IMR-90 (cell line): ENCODE measurements at regions of chr13 and their contacts with region 1.

Region 1: DNA sequence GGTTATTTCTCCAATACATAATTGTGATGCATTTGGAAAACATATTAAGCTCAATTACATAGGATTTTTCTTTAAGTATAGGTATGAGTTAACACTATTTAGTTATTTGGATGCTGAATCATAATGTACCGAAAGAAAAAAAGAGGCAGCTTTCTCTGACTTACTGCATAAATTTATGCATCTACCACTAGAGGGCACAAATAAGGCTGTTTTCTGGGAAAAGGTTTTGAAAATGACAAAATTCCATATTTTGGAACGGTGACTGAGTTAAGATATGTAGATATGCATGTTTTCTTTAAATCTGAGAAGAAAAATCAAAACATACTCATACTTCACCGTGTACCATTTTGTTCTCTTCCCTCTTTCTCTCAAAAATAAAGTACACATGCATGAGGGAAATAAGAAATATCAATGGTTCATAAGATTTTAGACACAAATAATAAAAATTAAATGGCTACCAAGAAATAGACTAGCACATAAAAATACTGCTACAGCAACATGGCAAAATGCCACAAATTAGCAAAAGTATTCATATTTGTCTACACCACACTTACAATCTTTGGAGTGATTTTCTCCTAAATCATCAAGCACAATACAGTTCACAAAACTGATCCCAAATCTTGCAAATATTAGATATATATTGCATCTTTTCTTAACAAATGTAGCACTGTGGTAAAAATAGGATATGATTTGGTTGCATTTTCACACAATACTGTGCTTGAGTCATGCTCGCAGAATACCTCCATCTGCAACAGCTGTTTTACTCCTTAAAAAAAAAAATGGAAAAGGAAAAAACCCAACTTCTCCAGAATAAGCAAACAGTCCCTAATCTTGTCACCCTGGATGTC is 260.0 kb downstream of the FGF14 start:
- DNase-seq: peak; percentile 35
- ATAC-seq: peak; percentile 53
- H3K4me3 ChIP-seq: no peak overlapping the region
- H3K27ac ChIP-seq: no peak overlapping the region
- H3K4me1 ChIP-seq: no peaks in the 10 kb centered on the region
- H3K27me3 ChIP-seq: no peaks in the 10 kb centered on the region
- CTCF ChIP-seq: peak; percentile 72
- POLR2A ChIP-seq: no peak
- RAD21 ChIP-seq: peak; percentile 59

Region 2: DNA sequence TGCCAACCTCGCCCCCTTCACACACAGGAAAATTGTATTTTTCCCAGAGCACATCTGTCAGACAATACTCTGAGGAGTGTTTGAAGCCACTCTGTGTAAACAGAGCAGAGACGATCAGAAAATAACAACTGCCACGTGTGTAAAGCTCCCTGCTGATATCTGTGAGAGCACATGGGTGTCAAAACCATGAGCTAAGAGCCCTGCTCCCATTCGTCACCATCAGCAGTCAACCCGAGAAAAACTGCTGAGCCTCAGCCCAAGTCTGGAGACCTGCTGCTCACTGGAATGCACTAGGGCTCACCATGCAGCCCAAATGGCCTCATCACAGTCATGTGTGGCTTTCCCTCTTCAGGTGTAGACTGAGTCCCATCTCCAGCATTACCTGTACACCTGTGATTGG is 44.1 kb before region 1 on chr13:
- CTCF ChIA-PET with region 1: no interaction called
- POLR2A ChIA-PET with region 1: no interaction called
- dilution Hi-C with region 1: no loop called
- in situ Hi-C with region 1: no loop called
- intact Hi-C with region 1: no loop called
- DNase-seq: no peak
- ATAC-seq: no peak
- H3K4me3 ChIP-seq: no peak overlapping the region
- H3K27ac ChIP-seq: no peak overlapping the region
- H3K4me1 ChIP-seq: no peaks in the 10 kb centered on the region
- H3K27me3 ChIP-seq: no peaks in the 10 kb centered on the region
- CTCF ChIP-seq: no peak
- POLR2A ChIP-seq: no peak
- RAD21 ChIP-seq: no peak

Region 3: DNA sequence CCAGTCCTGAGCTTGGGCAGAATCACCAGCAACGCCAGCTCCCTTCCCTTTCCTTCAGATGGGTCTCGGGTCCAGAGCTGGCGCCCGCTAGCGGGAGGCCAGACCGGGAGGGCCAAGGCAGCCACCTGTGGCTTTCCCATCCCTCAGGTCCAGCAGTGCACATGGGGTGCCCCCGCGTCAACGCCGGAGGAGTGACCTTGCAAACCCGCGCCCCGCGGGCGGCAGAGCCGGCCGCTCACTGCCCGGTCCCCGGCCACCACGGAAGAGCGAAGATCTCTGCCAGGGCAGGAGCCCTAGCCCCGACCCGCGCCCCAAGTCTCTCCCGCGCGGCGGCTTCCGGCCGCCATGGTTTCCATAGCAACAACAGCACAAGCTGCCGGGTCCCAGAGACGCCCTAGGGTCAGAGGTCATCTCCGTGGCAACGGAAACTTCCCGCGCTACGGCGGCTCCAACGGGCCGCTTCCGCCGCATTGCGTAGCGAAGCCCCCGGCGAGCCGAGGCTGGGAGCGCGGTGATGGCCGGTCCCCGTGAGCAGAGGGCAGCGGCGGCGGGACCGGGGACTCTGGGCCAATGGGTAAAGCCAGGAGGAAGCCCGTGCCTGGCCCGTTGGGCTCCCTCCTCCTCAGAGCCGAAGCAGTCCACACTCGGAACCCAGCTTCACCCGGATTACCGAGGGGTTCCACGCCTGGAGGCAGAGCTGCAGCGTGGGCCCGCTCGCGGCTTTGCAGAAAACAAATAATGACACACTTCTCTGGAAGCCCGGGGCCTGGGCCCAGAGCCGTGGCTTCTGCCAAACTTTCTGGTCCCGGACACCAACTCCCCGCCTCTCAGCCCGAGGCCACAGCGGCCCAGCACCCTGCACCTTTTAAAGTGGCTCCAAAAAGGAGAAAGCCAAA is 252.6 kb after region 1 on chr13:
- CTCF ChIA-PET with region 1: interaction called, 4 read pairs
- POLR2A ChIA-PET with region 1: no interaction called
- dilution Hi-C with region 1: no loop called
- in situ Hi-C with region 1: no loop called
- intact Hi-C with region 1: loop called (anchors 1 kb)
- DNase-seq: peak; percentile 73
- ATAC-seq: peak; percentile 95
- H3K4me3 ChIP-seq: peak overlapping the region; percentile 66
- H3K27ac ChIP-seq: peak overlapping the region; percentile 62
- H3K4me1 ChIP-seq: no peaks in the 10 kb centered on the region
- H3K27me3 ChIP-seq: peaks cover 2% of the 10 kb centered on the region
- CTCF ChIP-seq: 0 out of 2 replicates have a peak, but pooled peaks have one; percentile 4
- POLR2A ChIP-seq: no peak
- RAD21 ChIP-seq: no peak

Region 4: GRCh38 chr13:102466610-102467190 is 324.9 kb after region 1 on chr13:
- CTCF ChIA-PET with region 1: interaction called, 3 read pairs
- POLR2A ChIA-PET with region 1: no interaction called
- dilution Hi-C with region 1: no loop called
- in situ Hi-C with region 1: loop called (anchors 25 kb)
- intact Hi-C with region 1: no loop called
- DNase-seq: no peak
- ATAC-seq: no peak
- H3K4me3 ChIP-seq: no peak overlapping the region
- H3K27ac ChIP-seq: no peak overlapping the region
- H3K4me1 ChIP-seq: no peaks in the 10 kb centered on the region
- H3K27me3 ChIP-seq: no peaks in the 10 kb centered on the region
- CTCF ChIP-seq: no peak
- POLR2A ChIP-seq: no peak
- RAD21 ChIP-seq: no peak